RWPE1 (cell line): ENCODE measurements at regions of chr4 and their contacts with region 1.

Region 1: GRCh38 chr4:38179690-38180377 is 219.6 kb downstream of the PTTG2 start:
- DNase-seq: peak; percentile 64
- H3K27ac ChIP-seq: no peak overlapping the region
- CTCF ChIP-seq: peak; percentile 91

Region 2: GRCh38 chr4:38313999-38314561 is 134.2 kb after region 1 on chr4:
- CTCF ChIA-PET with region 1: interaction called, 14 read pairs
- POLR2A ChIA-PET with region 1: no interaction called
- DNase-seq: peak; percentile 74
- H3K27ac ChIP-seq: peak overlapping the region; percentile 92
- CTCF ChIP-seq: no peak

Region 3: DNA sequence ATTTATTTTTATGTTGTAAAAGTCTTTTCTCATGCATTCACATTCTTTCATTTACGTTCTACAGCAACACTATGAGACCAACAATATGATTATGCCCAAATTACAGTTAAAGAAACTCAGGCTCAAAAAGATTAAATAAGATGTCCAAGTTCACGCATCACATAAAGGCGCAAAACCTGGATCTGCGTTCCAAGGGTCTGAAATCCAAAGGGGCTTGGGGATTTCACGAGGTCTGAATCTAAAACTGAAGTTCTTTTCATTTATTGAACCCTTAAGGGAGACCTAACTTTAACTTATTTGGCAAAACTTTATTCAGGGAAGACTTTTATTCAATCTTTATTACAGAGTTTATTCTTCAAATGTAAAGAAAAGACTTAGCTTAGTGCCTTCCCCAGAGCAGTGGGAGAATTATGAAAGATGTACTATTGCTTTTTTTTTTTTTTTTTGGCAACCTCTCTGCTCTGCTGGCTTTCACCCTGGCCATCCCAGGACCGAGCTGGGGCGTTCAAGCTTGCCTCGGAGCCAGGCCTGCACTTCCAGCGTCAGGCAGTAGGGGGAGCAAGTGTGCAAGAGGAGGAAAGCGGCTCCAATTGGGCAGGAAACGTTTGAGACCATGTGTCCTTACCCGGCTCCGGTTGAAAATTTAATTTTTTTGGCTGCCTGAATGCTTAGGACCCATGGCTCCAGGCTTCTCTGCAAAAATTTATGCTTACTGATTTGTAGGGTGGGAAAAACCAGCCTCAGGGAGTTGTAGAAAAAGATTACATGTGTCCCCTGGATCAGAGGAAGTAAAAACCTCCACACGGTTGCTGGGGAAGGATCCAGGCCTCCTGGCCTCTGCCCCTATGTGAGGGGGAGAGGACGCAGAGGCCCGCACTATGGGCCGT is 139.9 kb after region 1 on chr4:
- CTCF ChIA-PET with region 1: interaction called, 14 read pairs
- POLR2A ChIA-PET with region 1: no interaction called
- DNase-seq: peak; percentile 81
- H3K27ac ChIP-seq: peak overlapping the region; percentile 78
- CTCF ChIP-seq: peak; percentile 97

Region 4: DNA sequence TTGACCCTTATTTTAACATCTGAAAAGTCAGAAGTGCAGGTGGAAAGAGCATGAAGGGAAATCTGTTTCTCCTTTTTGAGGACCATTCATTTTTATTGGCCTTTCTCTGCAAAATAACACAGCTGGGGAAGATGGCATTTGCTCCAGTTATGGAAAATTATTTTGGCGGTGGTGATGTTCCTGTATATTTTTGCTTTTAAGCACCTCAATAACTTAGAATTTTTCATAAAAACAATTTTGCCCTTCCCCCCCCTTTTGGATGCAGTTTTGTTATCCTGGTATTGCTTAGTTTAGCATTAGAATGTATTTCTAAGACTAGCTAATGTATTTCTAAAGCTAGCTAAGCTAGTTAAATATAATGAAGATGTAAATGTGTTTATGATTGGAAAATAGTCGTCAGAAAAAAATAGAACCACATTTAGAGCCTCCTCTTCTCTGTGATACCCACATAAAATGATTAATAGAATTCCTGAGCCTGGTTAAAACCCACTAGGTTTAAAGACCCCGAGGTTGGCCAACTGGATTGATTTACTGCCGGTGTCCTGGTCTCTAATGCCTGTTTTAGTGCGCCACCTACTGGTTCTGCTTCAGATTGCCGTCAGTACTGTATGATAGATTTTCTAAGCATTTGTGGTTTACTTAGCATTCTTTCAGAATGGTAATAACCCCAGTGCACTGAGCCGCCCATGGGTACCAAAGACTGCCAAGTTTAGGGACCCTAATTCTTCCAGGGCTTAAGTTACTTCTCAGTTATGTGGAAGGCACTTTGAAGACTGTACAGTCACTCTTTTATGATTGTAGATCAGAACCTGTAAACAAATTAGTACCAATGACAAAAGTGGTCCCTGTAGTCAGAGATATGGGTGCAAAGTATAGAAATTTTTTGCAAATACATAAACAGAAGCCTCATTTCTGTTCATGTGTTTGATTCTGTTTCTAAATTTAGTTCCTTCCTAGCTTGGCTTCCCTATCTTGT is 495.6 kb after region 1 on chr4:
- CTCF ChIA-PET with region 1: interaction called, 16 read pairs
- POLR2A ChIA-PET with region 1: no interaction called
- DNase-seq: peak; percentile 55
- H3K27ac ChIP-seq: peak overlapping the region; percentile 100
- CTCF ChIP-seq: peak; percentile 87

Region 5: GRCh38 chr4:38730830-38731646 is 551.2 kb after region 1 on chr4:
- CTCF ChIA-PET with region 1: interaction called, 32 read pairs
- POLR2A ChIA-PET with region 1: no interaction called
- DNase-seq: peak; percentile 63
- H3K27ac ChIP-seq: no peak overlapping the region
- CTCF ChIP-seq: peak; percentile 83